Lower lobe of right lung (tissue), 2 donors: ENCODE measurements at regions of chr17 and their contacts with region 1.

Region 1: GRCh38 chr17:76121932-76122430 is 18.4 kb upstream of the EXOC7 start:
- DNase-seq: no peak
- ATAC-seq: peak; percentile 40 to 55
- H3K4me3 ChIP-seq: peak overlapping the region; percentile 48
- H3K27ac ChIP-seq: peak overlapping the region; percentile 3
- H3K4me1 ChIP-seq: peaks cover 8% of the 10 kb centered on the region
- H3K27me3 ChIP-seq: no peaks in the 10 kb centered on the region
- CTCF ChIP-seq: no peak

Region 2: GRCh38 chr17:76182016-76182764 is 60.2 kb after region 1 on chr17:
- intact Hi-C with region 1: loop called (anchors 5 kb)
- DNase-seq: peak; percentile 89
- ATAC-seq: peak; percentile 94 to 95
- H3K4me3 ChIP-seq: no peak overlapping the region
- H3K27ac ChIP-seq: no peak overlapping the region
- H3K4me1 ChIP-seq: no peaks in the 10 kb centered on the region
- H3K27me3 ChIP-seq: no peaks in the 10 kb centered on the region
- CTCF ChIP-seq: peak; percentile 87